WTC11 (cell line): ENCODE measurements at regions of chr14 and their contacts with region 1.

Region 1: DNA sequence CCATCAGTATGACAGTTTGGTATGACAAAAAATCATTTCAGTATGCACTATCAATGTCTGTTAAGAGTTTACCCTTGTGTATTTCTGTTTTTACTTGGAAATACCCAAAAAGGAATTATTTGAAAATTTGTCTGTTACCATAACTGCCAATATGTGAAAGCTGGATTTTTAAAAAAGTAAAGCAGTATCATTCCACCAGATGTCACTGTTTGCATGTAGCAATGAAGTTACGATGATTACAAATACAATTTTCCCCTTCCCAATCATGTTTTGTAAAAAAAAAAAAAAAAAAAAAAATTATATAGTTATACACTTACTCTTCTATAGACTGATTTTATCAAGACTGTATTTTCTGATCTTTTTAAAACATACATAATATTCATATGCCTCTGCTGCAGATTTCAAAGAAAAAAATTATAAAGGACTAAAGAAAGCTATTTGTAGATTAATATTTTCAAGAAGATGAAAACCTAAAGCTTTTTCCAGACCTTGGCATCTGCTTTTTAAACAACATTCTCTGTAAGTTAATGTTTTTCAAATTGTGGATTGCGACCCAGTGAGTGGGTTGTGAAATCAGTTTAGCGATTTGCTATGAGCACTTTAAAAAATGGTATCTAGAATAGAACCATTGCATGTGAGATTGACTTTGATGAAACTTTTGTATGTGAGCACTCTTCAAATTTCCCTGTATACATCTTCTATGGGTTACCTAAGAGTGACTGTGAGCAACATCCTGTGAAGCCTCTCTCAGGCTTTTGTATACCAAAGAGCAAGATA is 114.2 kb downstream of the TTC6 start:
- DNase-seq: no peak
- ATAC-seq: no peak
- H3K4me3 Mint-ChIP-seq: no peak overlapping the region
- H3K27ac Mint-ChIP-seq: no peak overlapping the region
- H3K4me1 Mint-ChIP-seq: peaks cover 8% of the 10 kb centered on the region
- H3K27me3 Mint-ChIP-seq: peaks cover 6% of the 10 kb centered on the region
- CTCF ChIP-seq: no peak

Region 2: GRCh38 chr14:37529638-37530037 is 180.0 kb before region 1 on chr14:
- CTCF ChIA-PET with region 1: no interaction called
- POLR2A ChIA-PET with region 1: no interaction called
- DNase-seq: no peak
- ATAC-seq: no peak
- H3K4me3 Mint-ChIP-seq: no peak overlapping the region
- H3K27ac Mint-ChIP-seq: no peak overlapping the region
- H3K4me1 Mint-ChIP-seq: no peaks in the 10 kb centered on the region
- H3K27me3 Mint-ChIP-seq: peaks cover 2% of the 10 kb centered on the region; the same call in 1 of the 2 replicates
- CTCF ChIP-seq: no peak

Region 3: GRCh38 chr14:37668646-37669045 is 41.0 kb before region 1 on chr14:
- CTCF ChIA-PET with region 1: no interaction called
- POLR2A ChIA-PET with region 1: no interaction called
- DNase-seq: no peak
- ATAC-seq: no peak
- H3K4me3 Mint-ChIP-seq: no peak overlapping the region
- H3K27ac Mint-ChIP-seq: no peak overlapping the region
- H3K4me1 Mint-ChIP-seq: no peaks in the 10 kb centered on the region
- H3K27me3 Mint-ChIP-seq: peaks cover 8% of the 10 kb centered on the region
- CTCF ChIP-seq: no peak

Region 4: DNA sequence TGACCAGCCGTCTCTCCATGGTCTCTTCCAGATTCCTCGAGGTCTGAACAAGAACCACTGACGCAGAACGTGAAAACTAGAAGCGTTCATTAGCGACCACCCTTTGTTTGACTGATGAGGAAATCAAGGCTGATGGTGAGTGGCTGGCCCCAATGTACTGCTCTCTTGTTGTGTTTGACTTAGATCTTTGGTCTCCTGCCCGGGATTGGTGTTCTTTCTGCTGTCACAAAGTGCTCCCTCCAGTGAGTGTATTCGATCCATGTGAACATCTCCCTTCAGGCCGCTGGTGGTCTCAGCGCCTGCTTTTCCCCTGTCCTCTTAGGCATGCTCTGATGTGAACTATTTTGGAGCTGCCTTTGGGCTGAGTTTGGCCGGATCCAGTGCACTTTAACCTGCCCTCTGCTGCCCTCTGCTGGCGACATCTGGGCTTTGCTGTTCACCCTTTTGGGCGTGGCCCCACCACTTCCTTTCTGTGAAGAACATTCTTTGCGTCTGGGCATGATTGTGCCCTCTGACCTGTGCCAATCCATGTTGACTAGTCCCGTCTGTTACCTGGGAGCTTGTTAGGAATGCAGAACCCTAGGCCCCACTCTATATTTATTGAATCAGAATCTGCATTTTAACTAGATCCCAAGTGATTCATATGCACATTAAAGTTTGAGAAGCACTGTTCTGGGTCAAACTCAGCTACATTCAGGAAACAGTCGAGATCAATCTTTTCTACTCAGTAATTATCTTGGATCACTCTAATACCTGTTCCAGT is 165.0 kb after region 1 on chr14:
- CTCF ChIA-PET with region 1: interaction called, 61 read pairs
- POLR2A ChIA-PET with region 1: no interaction called
- DNase-seq: peak; percentile 94
- ATAC-seq: peak; percentile 97
- H3K4me3 Mint-ChIP-seq: no peak overlapping the region
- H3K27ac Mint-ChIP-seq: no peak overlapping the region
- H3K4me1 Mint-ChIP-seq: peaks cover 16% of the 10 kb centered on the region
- H3K27me3 Mint-ChIP-seq: peaks cover 18% of the 10 kb centered on the region
- CTCF ChIP-seq: peak; percentile 92

Region 5: GRCh38 chr14:37889087-37889486 is 179.5 kb after region 1 on chr14:
- CTCF ChIA-PET with region 1: interaction called, 11 read pairs
- POLR2A ChIA-PET with region 1: no interaction called
- DNase-seq: no peak
- ATAC-seq: peak; percentile 56; the same call in 1 of the 2 replicates
- H3K4me3 Mint-ChIP-seq: no peak overlapping the region
- H3K27ac Mint-ChIP-seq: no peak overlapping the region
- H3K4me1 Mint-ChIP-seq: peaks cover 14% of the 10 kb centered on the region
- H3K27me3 Mint-ChIP-seq: peaks cover 46% of the 10 kb centered on the region
- CTCF ChIP-seq: no peak